ENCODE measurements at regions of chr1 and their contacts with region 1.

Region 1: GRCh38 chr1:161225534-161226319 is at the start of gene TOMM40L:
- DNase-seq: peak; percentile 94 to 96 (median 94)
- ATAC-seq: peak; percentile 97
- H3K4me3 ChIP-seq: peak within 1 kb of the TSS; percentile 73
- H3K27ac ChIP-seq: peak within 1 kb of the TSS; percentile 71
- H3K4me1 ChIP-seq: peaks cover 6% of the 10 kb centered on the region
- H3K27me3 ChIP-seq: no peaks in the 10 kb centered on the region
- total RNA-seq, gene TOMM40L: 27.7 to 42.9 (median 32.1) TPM

Region 2: DNA sequence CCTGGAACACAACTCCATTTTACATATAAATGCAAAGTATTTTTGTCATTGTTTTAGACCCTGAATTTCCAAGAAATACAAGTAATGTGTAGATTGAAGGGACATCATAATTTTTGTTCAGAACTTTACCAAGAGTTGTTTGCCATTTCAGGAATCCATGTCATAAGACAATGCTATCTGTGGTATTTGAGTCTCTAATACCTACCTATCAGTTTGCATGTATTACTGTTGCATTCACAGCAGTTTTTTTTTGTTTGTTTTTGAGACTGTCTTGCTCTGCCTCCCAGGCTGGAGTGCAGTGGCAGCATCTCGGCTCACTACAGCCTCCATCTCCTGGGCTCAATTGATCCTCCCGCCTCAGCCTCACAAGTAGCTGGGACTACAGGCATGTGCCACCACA is 66.9 kb after region 1 on chr1:
- intact Hi-C with region 1: loop called in 2 of 4 experiments (anchors 5 kb)
- DNase-seq: no peak
- ATAC-seq: no peak
- H3K4me3 ChIP-seq: no peak overlapping the region
- H3K27ac ChIP-seq: no peak overlapping the region
- H3K4me1 ChIP-seq: no peaks in the 10 kb centered on the region
- H3K27me3 ChIP-seq: no peaks in the 10 kb centered on the region

Region 3: DNA sequence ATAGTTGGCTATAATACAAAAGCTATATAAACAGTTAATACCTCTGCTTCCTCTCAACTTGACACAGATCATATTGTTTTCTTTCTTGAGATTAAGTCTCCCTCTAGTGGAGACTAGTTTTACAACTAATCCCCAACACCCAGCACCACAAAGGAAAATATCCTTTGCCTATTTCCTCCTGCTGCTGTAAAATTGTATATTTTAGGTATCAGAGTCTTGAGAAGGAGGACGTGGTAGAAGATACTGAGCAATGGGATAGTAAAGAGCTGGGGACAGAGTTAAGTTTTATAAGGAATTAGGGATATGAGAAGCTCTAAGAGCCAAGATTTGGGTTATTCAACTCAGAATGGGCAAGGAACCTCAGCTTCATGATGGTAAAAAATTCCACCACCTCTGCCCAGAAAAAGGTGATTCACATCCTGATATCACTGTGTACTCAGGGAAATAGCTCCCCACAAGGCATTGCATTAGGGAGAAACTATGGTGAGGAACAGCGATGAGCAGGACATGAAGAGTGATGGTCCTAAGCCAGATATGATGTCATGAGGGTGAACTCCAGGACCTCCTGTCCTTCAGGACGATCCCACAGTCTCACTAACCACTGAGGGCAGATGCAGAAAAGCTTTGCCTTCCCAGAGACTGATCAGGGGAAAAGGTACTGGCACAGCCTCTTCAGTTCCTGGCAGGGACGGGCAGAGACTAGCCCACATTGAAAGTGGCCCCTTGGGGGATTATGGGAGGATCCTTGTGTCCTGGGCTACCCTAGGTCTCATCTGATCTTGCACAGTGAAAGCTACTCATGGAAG is 156.7 kb after region 1 on chr1:
- intact Hi-C with region 1: loop called in 3 of 4 experiments (anchors 5 kb)
- DNase-seq: peak in 1 of 3 donors; percentile 31
- ATAC-seq: peak; percentile 81 to 90
- H3K4me3 ChIP-seq: no peak overlapping the region
- H3K27ac ChIP-seq: no peak overlapping the region
- H3K4me1 ChIP-seq: no peaks in the 10 kb centered on the region
- H3K27me3 ChIP-seq: no peaks in the 10 kb centered on the region